HEK293T (cell line): ENCODE measurements at regions of chr2 and their contacts with region 1.

Region 1: DNA sequence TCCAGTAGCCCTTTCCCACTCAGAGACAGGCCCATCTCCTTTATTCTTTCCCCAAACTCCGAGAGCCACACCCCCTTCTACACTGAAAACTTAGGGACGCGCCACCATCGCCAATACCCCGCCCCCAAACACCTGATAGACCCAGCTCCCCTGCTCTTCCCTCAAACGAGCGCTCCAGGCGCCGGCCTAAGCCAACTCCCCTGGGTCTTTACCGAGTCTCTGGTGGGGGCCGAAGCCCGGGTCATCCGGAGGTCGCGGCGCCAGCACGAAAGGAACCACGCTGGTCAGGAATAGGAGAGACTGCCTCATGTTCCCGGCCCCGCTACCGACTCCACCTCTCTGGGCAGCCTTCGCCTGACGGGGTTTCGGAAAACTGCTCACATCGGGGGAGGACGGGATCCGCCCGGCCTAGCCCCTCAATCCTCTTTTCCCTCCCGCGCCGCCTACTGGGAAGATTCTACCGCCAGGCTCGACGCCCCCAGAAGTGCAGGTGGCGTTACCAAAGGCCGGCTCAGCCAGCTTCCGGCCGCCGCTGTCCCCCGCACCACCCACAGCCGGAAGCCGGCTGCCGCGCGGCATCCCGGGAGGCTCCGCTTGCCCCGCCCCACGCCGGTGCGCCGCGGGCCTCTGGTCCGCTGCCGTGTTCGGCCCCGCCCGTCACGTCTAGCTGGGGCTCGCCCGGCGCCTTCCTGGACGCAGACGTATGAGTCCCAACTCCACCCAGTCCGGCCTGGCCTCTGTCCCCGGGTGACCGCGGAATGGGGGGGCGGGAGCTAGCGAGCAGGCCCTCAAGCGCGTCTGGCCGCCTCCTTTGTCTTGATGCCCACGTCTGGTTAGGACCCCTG is at the start of gene ADAM17:
- DNase-seq: peak; percentile 92

Region 2: DNA sequence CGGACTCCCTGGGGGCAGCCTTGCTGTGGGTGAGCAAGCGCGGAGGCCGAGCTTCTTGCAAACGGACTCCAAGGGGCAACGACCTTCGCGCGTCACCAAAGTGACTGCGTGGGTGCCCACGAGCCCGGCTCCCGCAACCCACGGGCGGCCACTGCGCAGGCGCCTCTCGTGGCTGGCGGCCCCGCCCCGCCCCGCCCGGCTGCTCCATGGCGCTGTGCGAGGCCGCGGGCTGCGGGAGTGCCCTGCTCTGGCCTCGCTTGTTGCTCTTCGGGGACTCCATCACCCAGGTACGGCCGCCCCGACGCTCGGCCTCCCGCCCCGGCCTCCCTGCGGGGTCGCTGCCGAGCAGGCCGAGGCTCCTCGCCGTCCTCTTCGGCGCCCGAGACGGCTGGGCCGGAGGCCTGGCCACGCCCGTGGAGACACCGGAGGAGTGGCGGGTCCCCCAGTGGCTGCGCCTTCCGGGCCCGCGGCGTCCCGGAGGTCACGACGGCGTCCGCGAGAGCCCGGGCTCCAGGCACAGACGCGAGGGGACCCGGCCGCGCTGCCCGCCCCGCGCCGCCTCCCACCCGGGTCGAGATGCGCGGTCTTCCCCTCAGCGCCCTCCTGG is 81.1 kb before region 1 on chr2 and contains the start of gene IAH1:
- CTCF ChIA-PET with region 1: no interaction called
- POLR2A ChIA-PET with region 1: no interaction called
- DNase-seq: peak; percentile 72

Region 3: GRCh38 chr2:9538000-9538507 is 17.5 kb before region 1 on chr2:
- CTCF ChIA-PET with region 1: no interaction called
- POLR2A ChIA-PET with region 1: interaction called, 11 read pairs
- DNase-seq: no peak

Region 4: DNA sequence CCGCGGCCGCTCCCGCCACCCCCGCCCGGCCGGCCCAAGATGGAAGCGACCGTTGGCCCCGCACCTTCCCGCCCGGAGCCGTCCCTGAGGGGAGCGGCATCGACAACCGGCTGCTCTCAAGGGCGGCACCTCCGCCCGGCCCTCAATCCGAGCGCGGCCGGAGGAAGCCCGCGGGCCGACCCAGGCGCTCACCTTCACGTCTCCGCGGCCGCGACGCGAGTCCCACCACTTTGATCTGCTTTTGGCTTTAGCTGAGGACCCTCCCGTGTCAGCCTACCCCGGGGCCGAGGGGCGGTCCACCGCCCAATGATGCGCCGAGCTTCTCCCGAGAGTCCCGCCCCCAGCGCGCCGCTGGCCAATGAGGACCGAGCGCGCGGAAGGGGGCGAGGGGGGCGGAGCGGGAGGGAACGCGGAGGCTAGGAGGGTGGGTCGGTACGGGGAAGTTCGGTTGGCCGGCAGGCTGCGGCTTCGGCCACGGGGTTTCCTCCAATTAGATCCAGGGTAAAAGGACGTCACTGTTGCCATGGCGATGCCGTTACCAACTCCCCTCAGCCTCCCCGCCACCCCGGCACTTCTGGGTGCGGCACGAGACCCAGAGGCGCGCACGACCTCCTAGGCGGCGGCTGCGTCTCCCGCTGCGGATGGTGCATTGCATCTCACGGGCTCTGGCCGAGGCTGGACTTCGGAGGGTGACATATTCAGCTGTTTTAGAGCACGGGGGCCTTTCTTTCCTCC is 75.4 kb after region 1 on chr2 and contains the start of gene YWHAQ:
- CTCF ChIA-PET with region 1: no interaction called
- POLR2A ChIA-PET with region 1: interaction called, 22 read pairs
- DNase-seq: peak; percentile 97

Region 5: GRCh38 chr2:9690252-9690651 is 134.7 kb after region 1 on chr2:
- CTCF ChIA-PET with region 1: no interaction called
- POLR2A ChIA-PET with region 1: interaction called, 10 read pairs
- DNase-seq: no peak

Region 6: GRCh38 chr2:9770308-9771100 is 215.0 kb after region 1 on chr2:
- CTCF ChIA-PET with region 1: interaction called, 4 read pairs
- POLR2A ChIA-PET with region 1: interaction called, 10 read pairs
- DNase-seq: peak; percentile 78